Heart left ventricle (tissue), 16 donors: ENCODE measurements at regions of chr5 and their contacts with region 1.

Region 1: DNA sequence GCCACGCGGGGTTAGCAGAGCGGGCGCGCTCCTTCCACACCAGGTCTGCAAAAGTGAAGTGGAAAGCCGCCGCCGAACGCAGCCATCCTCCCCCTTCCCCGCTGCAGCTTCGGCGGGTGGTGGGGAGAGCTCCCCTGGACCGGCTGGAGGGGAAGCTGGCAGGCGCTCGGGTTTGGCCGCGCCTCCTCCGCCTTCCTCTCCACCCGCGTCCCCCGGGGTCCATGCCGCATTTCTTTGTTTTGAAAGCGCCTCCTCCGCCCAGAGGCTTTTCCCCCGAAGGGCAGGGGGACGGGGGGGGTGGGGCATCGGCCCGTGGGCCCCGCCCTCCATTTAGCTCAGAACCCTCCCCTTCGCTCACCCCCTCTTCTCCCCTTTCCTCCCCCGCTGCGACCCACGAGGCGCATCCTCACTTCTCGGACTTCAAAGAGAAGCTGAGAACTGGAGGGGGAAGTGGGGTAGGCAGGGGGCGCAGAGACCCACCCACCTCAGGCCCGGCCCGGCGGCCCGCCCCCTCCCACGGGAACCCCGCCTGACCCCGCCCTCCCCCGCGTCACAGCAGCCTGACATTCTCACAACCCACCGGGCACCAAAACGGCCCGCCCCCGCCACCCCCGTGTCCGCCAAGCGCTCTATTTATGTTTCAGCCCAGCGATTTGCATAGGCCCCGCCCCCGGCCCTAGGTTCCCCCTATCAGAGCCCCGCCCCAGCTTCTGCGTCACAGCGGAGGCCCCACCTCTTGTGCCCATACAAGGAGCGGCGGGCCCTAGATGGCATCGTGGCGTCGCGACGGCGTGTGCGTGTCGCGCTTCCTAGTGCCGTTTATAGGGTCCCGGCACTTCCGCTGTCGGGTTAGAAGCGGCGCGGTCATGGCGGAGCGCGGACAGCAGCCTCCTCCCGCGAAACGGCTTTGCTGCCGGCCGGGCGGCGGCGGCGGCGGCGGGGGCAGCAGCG is at the start of gene ZSWIM6:
- DNase-seq: peak; percentile 99 to 100 (median 100)
- ATAC-seq: peak; percentile 94 to 98 (median 96)
- H3K4me3 ChIP-seq: peak within 1 kb of the TSS; percentile 69 to 96 (median 92)
- H3K27ac ChIP-seq: peak within 1 kb of the TSS; percentile 87 to 98 (median 94)
- H3K4me1 ChIP-seq: peaks cover 2 to 55% (median 25%) of the 10 kb centered on the region in 12 donors
- H3K27me3 ChIP-seq: no peaks in the 10 kb centered on the region
- CTCF ChIP-seq: peak in 1 of 12 donors; percentile 18
- POLR2A ChIP-seq: peak; percentile 95 to 97
- total RNA-seq, gene ZSWIM6: 4.5 to 14.9 (median 6.9) TPM

Region 2: GRCh38 chr5:60944904-60945812 is 386.5 kb before region 1 on chr5 and contains the starts of genes ERCC8 and NDUFAF2:
- intact Hi-C with region 1: loop called in 5 of 10 experiments (anchors 5 to 10 kb)
- DNase-seq: peak; percentile 92 to 95 (median 93)
- ATAC-seq: peak; percentile 99 to 100 (median 100)
- H3K4me3 ChIP-seq: peak within 1 kb of the TSS; percentile 57 to 88 (median 69)
- H3K27ac ChIP-seq: peak within 1 kb of the TSS; percentile 11 to 84 (median 76)
- H3K4me1 ChIP-seq: peaks cover 0 to 28% (median 18%) of the 10 kb centered on the region in 12 donors
- H3K27me3 ChIP-seq: no peaks in the 10 kb centered on the region
- CTCF ChIP-seq: no peak
- POLR2A ChIP-seq: peak in 1 of 2 donors; percentile 61
- total RNA-seq, gene ERCC8: 5.0 to 10.1 (median 6.1) TPM
- total RNA-seq, gene NDUFAF2: 22.9 to 50.1 (median 34.4) TPM

Region 3: GRCh38 chr5:61401726-61402125 is 70.0 kb after region 1 on chr5:
- intact Hi-C with region 1: loop called in 9 of 10 experiments (anchors 5 kb)
- DNase-seq: no peak
- ATAC-seq: peak in 3 of 4 donors; percentile 75 to 80 (median 79)
- H3K4me3 ChIP-seq: no peak overlapping the region
- H3K27ac ChIP-seq: no peak overlapping the region
- H3K4me1 ChIP-seq: peaks cover 0 to 53% (median 13%) of the 10 kb centered on the region in 12 donors
- H3K27me3 ChIP-seq: no peaks in the 10 kb centered on the region
- CTCF ChIP-seq: no peak
- POLR2A ChIP-seq: no peak

Region 4: DNA sequence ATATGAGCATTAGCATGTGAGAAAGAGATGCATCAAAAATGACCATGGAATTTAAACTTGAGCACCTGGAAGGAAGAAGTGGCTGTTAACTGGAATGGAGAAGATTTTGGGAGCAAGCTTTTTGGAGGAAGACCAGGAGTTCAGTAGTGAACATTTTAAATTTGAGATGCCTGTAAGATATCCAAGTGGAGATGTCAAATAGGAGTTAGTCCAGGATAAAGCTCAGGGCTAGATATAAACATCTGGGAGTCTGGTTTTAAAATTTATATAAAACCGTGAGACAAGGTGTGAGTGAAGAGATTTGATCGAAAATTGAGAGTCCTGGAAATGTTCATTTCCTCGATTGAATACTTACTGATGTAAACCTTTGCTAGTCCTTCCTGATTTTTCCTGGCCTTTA is 217.8 kb after region 1 on chr5:
- intact Hi-C with region 1: loop called in 1 of 10 experiments (anchors 10 kb)
- DNase-seq: no peak
- ATAC-seq: no peak
- H3K4me3 ChIP-seq: no peak overlapping the region
- H3K27ac ChIP-seq: no peak overlapping the region
- H3K4me1 ChIP-seq: peaks cover 0 to 21% (median 0%) of the 10 kb centered on the region in 12 donors
- H3K27me3 ChIP-seq: no peaks in the 10 kb centered on the region
- CTCF ChIP-seq: no peak
- POLR2A ChIP-seq: no peak

Region 5: DNA sequence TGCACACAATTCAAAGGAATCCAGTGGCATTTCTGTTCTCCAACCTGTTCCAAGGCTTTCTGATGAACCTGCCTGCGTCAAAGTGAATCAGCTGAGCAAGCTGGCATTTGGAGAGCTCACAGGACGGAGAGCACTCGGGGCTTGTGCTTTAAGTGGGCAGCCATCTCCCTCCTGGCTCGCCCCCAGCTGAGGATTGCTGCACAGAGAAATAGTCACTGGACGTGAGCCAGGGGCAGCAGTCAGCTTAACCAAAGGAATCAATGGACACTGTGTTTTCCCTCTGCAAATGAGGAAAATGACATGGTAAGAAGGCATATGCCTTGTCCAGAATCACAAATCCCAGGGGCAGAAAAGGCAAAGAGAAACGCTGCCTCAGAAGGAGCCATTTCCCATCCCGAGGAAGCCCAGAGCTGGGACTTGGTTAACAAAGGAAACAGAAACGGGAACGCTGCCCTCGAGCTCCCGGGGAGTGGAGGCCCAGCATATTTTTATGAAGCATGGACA is 299.8 kb after region 1 on chr5:
- intact Hi-C with region 1: loop called in 4 of 10 experiments (anchors 2 to 10 kb)
- DNase-seq: peak; percentile 43 to 82 (median 76)
- ATAC-seq: peak; percentile 72 to 89 (median 88)
- H3K4me3 ChIP-seq: peak overlapping the region in 4 of 12 donors; percentile 0 to 16 (median 16)
- H3K27ac ChIP-seq: peak overlapping the region; percentile 42 to 76 (median 60)
- H3K4me1 ChIP-seq: peaks cover 0 to 20% (median 16%) of the 10 kb centered on the region in 12 donors
- H3K27me3 ChIP-seq: no peaks in the 10 kb centered on the region
- CTCF ChIP-seq: no peak
- POLR2A ChIP-seq: no peak

Region 6: GRCh38 chr5:61817472-61818326 is 486.0 kb after region 1 on chr5:
- intact Hi-C with region 1: loop called in 1 of 10 experiments (anchors 10 kb)
- DNase-seq: peak in 3 of 5 donors; percentile 19 to 27 (median 27)
- ATAC-seq: peak in 2 of 4 donors; percentile 48 to 65
- H3K4me3 ChIP-seq: no peak overlapping the region
- H3K27ac ChIP-seq: no peak overlapping the region
- H3K4me1 ChIP-seq: peaks cover 0 to 6% (median 0%) of the 10 kb centered on the region in 12 donors
- H3K27me3 ChIP-seq: peaks cover 0 to 40% (median 5%) of the 10 kb centered on the region in 9 donors
- CTCF ChIP-seq: peak in 11 of 12 donors; percentile 35 to 69 (median 54)
- POLR2A ChIP-seq: no peak